GM12878 (cell line): ENCODE measurements at regions of chr4 and their contacts with region 1.

Region 1: DNA sequence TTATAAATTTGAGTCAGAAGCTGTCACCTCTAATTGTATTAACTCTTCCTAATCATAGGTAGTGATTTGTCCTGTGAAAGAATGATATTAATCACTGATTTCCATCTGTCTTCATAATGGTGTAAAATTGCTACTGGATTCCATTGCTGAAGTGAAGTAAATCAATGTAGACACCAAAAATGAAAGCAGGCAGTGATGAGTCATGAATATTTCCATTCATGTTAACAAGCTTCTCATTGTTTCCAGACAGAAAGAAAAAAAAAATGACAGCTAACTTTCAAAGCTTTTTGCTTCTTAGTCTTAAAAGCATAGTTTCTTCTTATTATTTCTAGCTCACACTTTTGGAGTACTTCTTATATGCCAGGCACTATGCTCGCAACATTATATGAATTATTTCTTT is 21.5 kb downstream of the FAM114A1 start:
- DNase-seq: peak; percentile 58
- ATAC-seq: peak; percentile 85
- H3K4me3 ChIP-seq: no peak overlapping the region
- H3K27ac ChIP-seq: peak overlapping the region; percentile 64; the same call in 1 of the 2 replicates
- H3K4me1 ChIP-seq: peaks cover 4% of the 10 kb centered on the region
- H3K27me3 ChIP-seq: no peaks in the 10 kb centered on the region
- CTCF ChIP-seq: no peak
- EP300 ChIP-seq: peak; percentile 68 to 86; a peak in 3 of 4 replicates
- POLR2A ChIP-seq: no peak
- RAD21 ChIP-seq: no peak

Region 2: GRCh38 chr4:38818441-38818976 is 70.6 kb before region 1 on chr4:
- CTCF ChIA-PET with region 1: interaction called, 3 read pairs
- POLR2A ChIA-PET with region 1: interaction called, 4 read pairs
- RAD21 ChIA-PET with region 1: interaction called, 5 read pairs
- SMC1A ChIA-PET with region 1: interaction called, 15 read pairs
- in situ Hi-C with region 1: no loop called
- intact Hi-C with region 1: no loop called
- DNase-seq: peak; percentile 81
- ATAC-seq: peak; percentile 76
- H3K4me3 ChIP-seq: no peak overlapping the region
- H3K27ac ChIP-seq: peak overlapping the region; percentile 96
- H3K4me1 ChIP-seq: peaks cover 40% of the 10 kb centered on the region
- H3K27me3 ChIP-seq: no peaks in the 10 kb centered on the region
- CTCF ChIP-seq: no peak
- EP300 ChIP-seq: peak; percentile 94 to 96; a peak in 3 of 4 replicates
- POLR2A ChIP-seq: no peak; the same call in 1 of the 2 replicates
- RAD21 ChIP-seq: no peak

Region 3: DNA sequence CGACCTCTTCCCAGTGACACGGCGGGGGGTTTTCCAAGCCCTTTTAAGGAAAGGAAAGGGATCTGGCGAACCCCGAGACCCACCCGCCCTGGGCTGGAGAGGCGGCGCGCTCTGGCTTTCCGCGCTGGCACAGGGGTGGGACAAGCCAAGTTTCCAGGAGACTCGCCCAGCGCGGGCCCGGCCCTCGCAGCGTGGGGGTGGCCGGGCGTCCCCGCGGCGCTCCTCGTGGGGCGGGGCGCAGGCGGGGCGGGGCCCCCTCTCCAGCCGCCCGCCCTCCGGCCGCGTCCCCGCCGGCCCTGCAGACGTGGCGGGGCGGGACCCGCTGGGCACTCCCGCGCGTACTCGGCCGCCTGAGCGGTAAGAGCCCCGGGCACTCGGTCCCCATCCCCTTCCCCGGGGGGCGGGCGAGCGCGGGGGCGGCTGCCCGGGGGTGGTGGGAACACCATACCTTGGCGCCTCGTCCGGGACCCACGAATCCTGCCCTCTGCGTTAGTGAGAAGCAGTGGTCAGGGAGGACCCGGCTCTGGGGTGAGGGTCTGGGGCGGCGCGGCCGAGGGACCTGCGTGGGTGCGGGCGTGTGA is 21.6 kb before region 1 on chr4 and contains the start of gene FAM114A1:
- CTCF ChIA-PET with region 1: interaction called, 17 read pairs
- POLR2A ChIA-PET with region 1: interaction called, 13 read pairs
- RAD21 ChIA-PET with region 1: interaction called, 11 read pairs
- SMC1A ChIA-PET with region 1: interaction called, 27 read pairs
- in situ Hi-C with region 1: no loop called
- intact Hi-C with region 1: no loop called
- DNase-seq: no peak
- ATAC-seq: peak; percentile 99
- H3K4me3 ChIP-seq: peak within 1 kb of the TSS; percentile 82
- H3K27ac ChIP-seq: no peak within 1 kb of the TSS; the same call in 1 of the 2 replicates
- H3K4me1 ChIP-seq: peaks cover 7% of the 10 kb centered on the region
- H3K27me3 ChIP-seq: no peaks in the 10 kb centered on the region
- CTCF ChIP-seq: no peak
- EP300 ChIP-seq: no peak
- POLR2A ChIP-seq: peak; percentile 80
- RAD21 ChIP-seq: no peak
- polyA plus RNA-seq, gene FAM114A1: 1.3 to 1.9 TPM

Region 4: DNA sequence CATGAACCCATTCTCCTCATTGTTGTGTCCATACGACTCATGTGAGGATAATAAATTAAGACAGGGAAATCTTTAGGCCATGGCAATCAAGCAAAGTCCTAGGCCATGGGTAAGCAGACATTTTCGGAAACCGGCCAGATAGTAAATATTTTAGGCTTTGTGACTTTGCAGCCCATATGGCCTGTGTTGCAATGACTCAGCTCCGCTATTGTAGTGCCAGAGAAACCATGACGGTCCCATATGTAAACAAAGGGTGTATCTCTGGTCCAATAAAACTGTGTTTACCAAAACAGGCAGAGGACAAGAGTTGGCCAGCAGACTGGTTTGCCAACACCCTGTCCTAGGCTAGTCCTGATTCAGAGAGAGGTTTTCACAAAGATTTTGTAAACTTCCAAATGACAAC is 16.5 kb before region 1 on chr4:
- CTCF ChIA-PET with region 1: interaction called, 17 read pairs
- POLR2A ChIA-PET with region 1: interaction called, 13 read pairs
- RAD21 ChIA-PET with region 1: interaction called, 11 read pairs
- SMC1A ChIA-PET with region 1: interaction called, 54 read pairs
- in situ Hi-C with region 1: no loop called
- intact Hi-C with region 1: no loop called
- DNase-seq: no peak
- ATAC-seq: no peak
- H3K4me3 ChIP-seq: no peak overlapping the region
- H3K27ac ChIP-seq: no peak overlapping the region
- H3K4me1 ChIP-seq: peaks cover 7% of the 10 kb centered on the region
- H3K27me3 ChIP-seq: no peaks in the 10 kb centered on the region
- CTCF ChIP-seq: no peak
- EP300 ChIP-seq: no peak
- POLR2A ChIP-seq: no peak
- RAD21 ChIP-seq: no peak